CD4-positive, alpha-beta memory T cell (primary cell): ENCODE measurements at regions of chr3 and their contacts with region 1.

Region 1: DNA sequence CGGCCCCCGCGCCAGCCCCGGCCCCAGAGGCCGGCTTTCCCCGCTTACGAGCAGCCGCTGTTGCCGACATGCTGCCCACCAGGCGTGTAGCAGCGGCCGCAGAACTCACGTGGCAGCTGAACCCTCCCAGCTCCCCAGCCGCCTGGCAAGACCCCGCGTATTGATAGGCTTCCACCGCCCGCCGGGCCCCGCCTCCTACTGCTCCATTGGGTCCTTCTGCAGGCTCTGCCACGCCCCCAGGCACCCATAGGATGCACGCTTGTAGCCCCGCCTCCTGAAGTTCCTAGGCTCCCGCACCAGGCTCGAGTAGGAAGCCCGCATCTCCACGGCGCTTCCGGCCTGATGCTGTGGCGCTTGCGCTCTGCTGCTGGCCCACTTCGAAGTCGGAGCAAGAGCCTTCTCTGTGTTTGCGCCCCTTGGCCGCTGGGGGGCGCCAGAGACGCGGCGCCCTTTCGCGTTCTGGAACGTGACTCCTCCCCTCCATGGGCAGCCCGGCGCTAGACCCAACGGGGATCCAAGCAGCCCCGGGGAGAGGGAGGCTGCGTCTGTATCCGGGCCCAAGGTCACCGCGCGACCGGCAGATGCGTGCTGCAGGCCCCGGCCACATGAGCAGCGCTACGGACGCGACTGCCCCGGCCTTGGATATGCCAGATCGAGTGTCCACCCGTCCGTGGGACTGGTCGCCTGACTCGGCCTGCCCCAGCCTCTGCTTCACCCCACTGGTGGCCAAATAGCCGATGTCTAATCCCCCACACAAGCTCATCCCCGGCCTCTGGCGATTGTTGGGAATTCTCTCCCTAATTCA is at the starts of genes PARP3 and RRP9:
- DNase-seq: peak; percentile 98 to 100 (median 100)
- H3K4me3 ChIP-seq: peak within 1 kb of the TSS; percentile 72 to 73
- H3K4me3 Mint-ChIP-seq: peak within 1 kb of the TSS; percentile 88 to 96 (median 92)
- H3K27ac ChIP-seq: peak within 1 kb of the TSS; percentile 66
- H3K27ac Mint-ChIP-seq: peak within 1 kb of the TSS; percentile 73 to 94 (median 91)
- H3K4me1 ChIP-seq: peaks cover 37% of the 10 kb centered on the region
- H3K4me1 Mint-ChIP-seq: peaks cover 18 to 48% (median 28%) of the 10 kb centered on the region in 4 donors
- H3K27me3 ChIP-seq: no peaks in the 10 kb centered on the region
- H3K27me3 Mint-ChIP-seq: no peaks in the 10 kb centered on the region
- total RNA-seq, gene PARP3: 8.1 to 10.5 TPM
- total RNA-seq, gene RRP9: 15.2 to 17.3 TPM

Region 2: GRCh38 chr3:51819709-51820406 is 122.1 kb before region 1 on chr3:
- CTCF ChIA-PET with region 1: no interaction called
- POLR2A ChIA-PET with region 1: no interaction called
- intact Hi-C with region 1: no loop called
- DNase-seq: no peak
- H3K4me3 ChIP-seq: no peak overlapping the region
- H3K4me3 Mint-ChIP-seq: no peak overlapping the region
- H3K27ac ChIP-seq: no peak overlapping the region
- H3K27ac Mint-ChIP-seq: peak overlapping the region in 2 of 7 donors; percentile 20 to 39
- H3K4me1 ChIP-seq: peaks cover 11% of the 10 kb centered on the region
- H3K4me1 Mint-ChIP-seq: peaks cover 10 to 18% (median 11%) of the 10 kb centered on the region in 4 donors
- H3K27me3 ChIP-seq: no peaks in the 10 kb centered on the region
- H3K27me3 Mint-ChIP-seq: peaks cover 23 to 31% of the 10 kb centered on the region in 2 donors

Region 3: DNA sequence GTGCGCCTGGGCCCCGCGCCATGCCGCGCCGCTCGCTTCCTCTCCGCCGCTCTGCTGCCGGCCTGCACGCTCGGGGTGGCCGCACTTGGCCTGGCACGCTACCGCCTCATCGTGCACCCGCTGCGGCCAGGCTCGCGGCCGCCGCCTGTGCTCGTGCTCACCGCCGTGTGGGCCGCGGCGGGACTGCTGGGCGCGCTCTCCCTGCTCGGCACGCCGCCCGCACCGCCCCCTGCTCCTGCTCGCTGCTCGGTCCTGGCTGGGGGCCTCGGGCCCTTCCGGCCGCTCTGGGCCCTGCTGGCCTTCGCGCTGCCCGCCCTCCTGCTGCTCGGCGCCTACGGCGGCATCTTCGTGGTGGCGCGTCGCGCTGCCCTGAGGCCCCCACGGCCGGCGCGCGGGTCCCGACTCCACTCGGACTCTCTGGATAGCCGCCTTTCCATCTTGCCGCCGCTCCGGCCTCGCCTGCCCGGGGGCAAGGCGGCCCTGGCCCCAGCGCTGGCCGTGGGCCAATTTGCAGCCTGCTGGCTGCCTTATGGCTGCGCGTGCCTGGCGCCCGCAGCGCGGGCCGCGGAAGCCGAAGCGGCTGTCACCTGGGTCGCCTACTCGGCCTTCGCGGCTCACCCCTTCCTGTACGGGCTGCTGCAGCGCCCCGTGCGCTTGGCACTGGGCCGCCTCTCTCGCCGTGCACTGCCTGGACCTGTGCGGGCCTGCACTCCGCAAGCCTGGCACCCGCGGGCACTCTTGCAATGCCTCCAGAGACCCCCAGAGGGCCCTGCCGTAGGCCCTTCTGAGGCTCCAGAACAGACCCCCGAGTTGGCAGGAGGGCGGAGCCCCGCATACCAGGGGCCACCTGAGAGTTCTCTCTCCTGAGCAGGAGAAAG is 14.1 kb after region 1 on chr3:
- CTCF ChIA-PET with region 1: interaction called, 7 read pairs
- POLR2A ChIA-PET with region 1: interaction called, 3 read pairs
- intact Hi-C with region 1: loop called (anchors 2 kb)
- DNase-seq: peak in 1 of 5 donors; percentile 26
- H3K4me3 ChIP-seq: no peak overlapping the region
- H3K4me3 Mint-ChIP-seq: peak overlapping the region; percentile 24 to 67 (median 42)
- H3K27ac ChIP-seq: no peak overlapping the region
- H3K27ac Mint-ChIP-seq: no peak overlapping the region
- H3K4me1 ChIP-seq: peaks cover 15% of the 10 kb centered on the region
- H3K4me1 Mint-ChIP-seq: peaks cover 0 to 8% (median 4%) of the 10 kb centered on the region in 4 donors
- H3K27me3 ChIP-seq: peaks cover 8% of the 10 kb centered on the region
- H3K27me3 Mint-ChIP-seq: peaks cover 5 to 12% of the 10 kb centered on the region in 2 donors

Region 4: DNA sequence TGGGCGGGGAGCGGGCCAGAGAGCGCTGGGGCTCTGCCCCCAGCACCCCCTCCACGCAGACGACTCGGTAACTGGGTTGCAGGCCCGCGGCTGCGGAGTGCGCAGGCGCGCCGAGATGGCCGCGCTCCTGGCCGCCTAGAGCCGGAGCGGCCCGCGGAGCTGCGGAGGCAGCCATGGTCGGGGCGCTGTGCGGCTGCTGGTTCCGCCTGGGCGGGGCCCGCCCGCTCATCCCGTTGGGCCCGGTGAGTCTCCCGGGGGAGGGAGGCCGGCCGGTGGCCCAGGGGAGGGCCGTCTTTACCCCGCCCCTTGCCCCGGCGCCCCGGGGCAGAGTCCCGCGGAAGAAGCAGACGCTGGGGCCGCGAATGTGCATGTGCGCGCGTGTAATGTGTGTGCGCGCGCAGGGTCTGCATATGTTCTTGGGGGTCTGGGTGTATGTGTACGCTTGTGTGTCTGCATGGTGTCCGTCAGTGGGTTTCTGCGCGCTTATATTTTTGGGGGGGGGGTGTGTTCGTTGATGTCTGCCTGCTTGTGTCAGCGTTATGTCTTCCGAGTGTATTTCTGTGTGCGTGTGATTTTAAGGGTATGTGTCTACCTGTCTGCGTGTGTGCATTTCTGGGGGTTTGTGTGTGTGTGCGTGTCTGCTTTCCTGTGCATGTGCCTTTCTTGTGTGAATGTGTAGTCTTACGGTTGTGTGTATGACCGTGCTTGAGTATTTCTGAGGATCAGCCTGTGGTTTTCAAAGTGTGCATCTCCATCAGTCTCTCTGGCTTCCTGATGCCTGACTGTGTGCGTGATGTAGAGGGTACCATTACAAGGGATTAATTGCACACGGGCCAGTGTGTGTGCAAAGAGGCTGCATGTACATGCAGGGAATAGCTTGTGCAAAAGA is 33.2 kb after region 1 on chr3 and contains the start of gene ABHD14A:
- CTCF ChIA-PET with region 1: interaction called, 49 read pairs
- POLR2A ChIA-PET with region 1: interaction called, 72 read pairs
- intact Hi-C with region 1: loop called (anchors 1 kb)
- DNase-seq: peak; percentile 75 to 80 (median 76)
- H3K4me3 ChIP-seq: peak within 1 kb of the TSS; percentile 81 to 95
- H3K4me3 Mint-ChIP-seq: peak within 1 kb of the TSS; percentile 90 to 99 (median 96)
- H3K27ac ChIP-seq: peak within 1 kb of the TSS; percentile 78
- H3K27ac Mint-ChIP-seq: peak within 1 kb of the TSS; percentile 68 to 98 (median 96)
- H3K4me1 ChIP-seq: peaks cover 32% of the 10 kb centered on the region
- H3K4me1 Mint-ChIP-seq: peaks cover 28 to 53% (median 41%) of the 10 kb centered on the region in 4 donors
- H3K27me3 ChIP-seq: no peaks in the 10 kb centered on the region
- H3K27me3 Mint-ChIP-seq: no peaks in the 10 kb centered on the region
- total RNA-seq, gene ABHD14A: 23.7 to 24.5 TPM

Region 5: GRCh38 chr3:51995346-51996163 is 53.6 kb after region 1 on chr3 and contains the start of gene RPL29:
- CTCF ChIA-PET with region 1: interaction called, 17 read pairs
- POLR2A ChIA-PET with region 1: interaction called, 31 read pairs
- intact Hi-C with region 1: loop called (anchors 1 kb)
- DNase-seq: peak; percentile 91 to 94 (median 94)
- H3K4me3 ChIP-seq: peak within 1 kb of the TSS; percentile 94 to 95
- H3K4me3 Mint-ChIP-seq: peak within 1 kb of the TSS; percentile 99 to 100 (median 100)
- H3K27ac ChIP-seq: peak within 1 kb of the TSS; percentile 91
- H3K27ac Mint-ChIP-seq: peak within 1 kb of the TSS; percentile 99 to 100 (median 100)
- H3K4me1 ChIP-seq: peaks cover 30% of the 10 kb centered on the region
- H3K4me1 Mint-ChIP-seq: peaks cover 16 to 45% (median 29%) of the 10 kb centered on the region in 4 donors
- H3K27me3 ChIP-seq: no peaks in the 10 kb centered on the region
- H3K27me3 Mint-ChIP-seq: no peaks in the 10 kb centered on the region
- total RNA-seq, gene RPL29: 1,263 to 1,270 TPM

Region 6: GRCh38 chr3:52056968-52057805 is 115.2 kb after region 1 on chr3:
- CTCF ChIA-PET with region 1: interaction called, 13 read pairs
- POLR2A ChIA-PET with region 1: interaction called, 12 read pairs
- intact Hi-C with region 1: loop called (anchors 1 kb)
- DNase-seq: peak; percentile 99 to 100 (median 99)
- H3K4me3 ChIP-seq: peak overlapping the region; percentile 90 to 97
- H3K4me3 Mint-ChIP-seq: peak overlapping the region; percentile 83 to 96 (median 92)
- H3K27ac ChIP-seq: peak overlapping the region; percentile 82
- H3K27ac Mint-ChIP-seq: peak overlapping the region; percentile 92 to 98 (median 96)
- H3K4me1 ChIP-seq: peaks cover 41% of the 10 kb centered on the region
- H3K4me1 Mint-ChIP-seq: peaks cover 20 to 44% (median 30%) of the 10 kb centered on the region in 4 donors
- H3K27me3 ChIP-seq: no peaks in the 10 kb centered on the region
- H3K27me3 Mint-ChIP-seq: no peaks in the 10 kb centered on the region

Region 7: DNA sequence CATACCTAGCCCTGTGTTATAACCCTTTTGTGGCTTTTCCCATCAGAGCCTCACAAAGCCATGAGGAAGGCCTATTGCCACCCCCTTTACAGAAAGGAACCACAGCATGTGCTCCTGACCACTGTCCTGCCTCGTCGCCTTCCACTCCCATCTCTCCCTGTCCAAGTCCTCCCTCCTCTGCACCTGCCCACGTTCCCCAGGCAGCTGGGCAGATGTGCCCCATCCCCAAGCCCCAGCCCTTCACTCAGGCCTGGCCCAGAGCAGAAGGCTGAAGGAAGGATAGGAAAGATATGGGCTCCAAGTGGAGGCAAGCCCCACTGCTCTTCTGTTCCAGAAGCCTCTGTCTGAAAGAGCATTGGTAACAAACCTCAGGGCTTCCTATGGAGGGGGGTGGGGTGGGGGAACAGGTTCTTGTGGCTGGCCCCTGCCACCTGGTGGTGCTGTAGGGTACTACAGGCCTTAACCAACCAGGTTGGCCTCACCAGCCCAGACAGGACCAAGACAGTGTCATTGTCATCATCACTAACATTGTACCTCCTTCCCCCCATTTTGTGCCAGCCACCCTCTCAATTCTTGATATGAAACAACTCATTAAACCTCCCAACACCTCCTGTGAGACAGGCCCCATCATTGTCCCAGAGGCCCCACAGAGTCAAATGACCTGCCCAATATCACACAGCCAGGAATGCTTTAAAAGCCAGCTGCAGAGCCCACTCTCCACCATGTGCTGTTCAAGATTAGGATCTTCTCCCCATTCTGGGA is 202.2 kb after region 1 on chr3:
- CTCF ChIA-PET with region 1: interaction called, 5 read pairs
- POLR2A ChIA-PET with region 1: interaction called, 3 read pairs
- intact Hi-C with region 1: loop called (anchors 1 kb)
- DNase-seq: peak; percentile 80 to 91 (median 82)
- H3K4me3 ChIP-seq: no peak overlapping the region
- H3K4me3 Mint-ChIP-seq: no peak overlapping the region
- H3K27ac ChIP-seq: no peak overlapping the region
- H3K27ac Mint-ChIP-seq: peak overlapping the region in 6 of 7 donors; percentile 32 to 82 (median 60)
- H3K4me1 ChIP-seq: peaks cover 6% of the 10 kb centered on the region
- H3K4me1 Mint-ChIP-seq: peaks cover 6 to 11% (median 9%) of the 10 kb centered on the region in 4 donors
- H3K27me3 ChIP-seq: no peaks in the 10 kb centered on the region
- H3K27me3 Mint-ChIP-seq: no peaks in the 10 kb centered on the region

Region 8: GRCh38 chr3:52270252-52270754 is 328.3 kb after region 1 on chr3:
- CTCF ChIA-PET with region 1: no interaction called
- POLR2A ChIA-PET with region 1: no interaction called
- intact Hi-C with region 1: no loop called
- DNase-seq: no peak
- H3K4me3 ChIP-seq: peak overlapping the region in 1 of 2 donors; percentile 47
- H3K4me3 Mint-ChIP-seq: peak overlapping the region; percentile 84 to 99 (median 92)
- H3K27ac ChIP-seq: peak overlapping the region; percentile 74
- H3K27ac Mint-ChIP-seq: peak overlapping the region; percentile 95 to 100 (median 96)
- H3K4me1 ChIP-seq: peaks cover 96% of the 10 kb centered on the region
- H3K4me1 Mint-ChIP-seq: peaks cover 59 to 93% (median 75%) of the 10 kb centered on the region in 4 donors
- H3K27me3 ChIP-seq: no peaks in the 10 kb centered on the region
- H3K27me3 Mint-ChIP-seq: no peaks in the 10 kb centered on the region

Region 9: DNA sequence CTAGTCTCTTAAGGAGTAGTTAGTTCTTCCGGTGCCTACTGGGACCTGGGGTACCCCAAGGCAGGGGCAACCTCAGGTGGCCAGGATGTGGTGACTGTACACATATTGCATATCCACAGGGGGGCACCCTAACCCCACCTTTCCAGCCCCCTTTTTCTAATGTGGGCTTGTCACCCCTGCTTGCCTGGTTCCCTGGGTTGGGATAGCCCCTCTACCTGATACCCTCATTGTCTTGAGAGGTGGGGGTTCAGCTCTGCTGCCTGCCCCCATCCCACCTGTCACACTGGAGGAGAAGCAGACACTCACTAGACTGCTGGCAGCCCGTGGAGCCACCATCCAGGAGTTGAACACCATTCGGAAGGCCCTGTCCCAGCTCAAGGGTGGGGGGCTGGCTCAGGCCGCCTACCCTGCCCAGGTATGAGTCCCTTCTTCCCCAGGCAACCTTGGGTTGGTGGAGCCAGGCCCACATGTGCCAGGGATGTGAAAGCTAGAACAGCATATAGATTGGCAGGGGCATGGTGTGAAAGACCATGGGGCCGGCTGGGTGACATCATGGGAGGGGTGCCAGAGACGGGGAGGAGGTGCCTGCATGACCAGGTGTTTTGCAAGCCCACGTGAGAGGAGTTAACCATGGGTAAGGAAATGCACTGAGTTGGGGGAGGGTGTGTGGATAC is 349.6 kb after region 1 on chr3:
- CTCF ChIA-PET with region 1: no interaction called
- POLR2A ChIA-PET with region 1: no interaction called
- intact Hi-C with region 1: no loop called
- DNase-seq: no peak
- H3K4me3 ChIP-seq: no peak overlapping the region
- H3K4me3 Mint-ChIP-seq: peak overlapping the region in 4 of 8 donors; percentile 29 to 78 (median 40)
- H3K27ac ChIP-seq: no peak overlapping the region
- H3K27ac Mint-ChIP-seq: peak overlapping the region in 4 of 7 donors; percentile 35 to 83 (median 64)
- H3K4me1 ChIP-seq: peaks cover 31% of the 10 kb centered on the region
- H3K4me1 Mint-ChIP-seq: peaks cover 18 to 40% (median 27%) of the 10 kb centered on the region in 4 donors
- H3K27me3 ChIP-seq: no peaks in the 10 kb centered on the region
- H3K27me3 Mint-ChIP-seq: no peaks in the 10 kb centered on the region